ENCODE measurements at regions of chr5 and their contacts with region 1.

Region 1: DNA sequence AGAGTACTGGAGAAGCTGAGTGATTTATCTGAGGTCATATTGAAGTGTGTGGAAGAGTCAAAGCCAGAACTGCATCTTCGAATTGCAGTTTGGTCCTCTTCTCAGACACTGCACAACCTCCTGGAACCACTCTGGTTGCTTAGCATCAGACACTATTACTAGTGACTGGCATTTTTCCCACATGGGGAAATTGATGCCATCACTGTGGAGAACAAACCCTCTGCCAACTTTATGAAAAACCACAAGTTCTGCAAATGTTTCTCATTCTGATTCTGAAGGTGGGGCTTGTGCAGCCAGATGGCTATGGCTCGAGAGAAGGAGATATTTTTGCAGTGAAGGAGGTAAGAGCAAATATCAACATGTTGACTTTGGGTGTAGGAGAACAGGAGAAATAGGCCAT is 67.2 kb downstream of the KCTD16 start:
- DNase-seq: no peak
- H3K4me3 ChIP-seq: no peak overlapping the region
- H3K27ac ChIP-seq: no peak overlapping the region
- H3K4me1 ChIP-seq: no peaks in the 10 kb centered on the region
- H3K27me3 ChIP-seq: no peaks in the 10 kb centered on the region
- CTCF ChIP-seq: no peak

Region 2: GRCh38 chr5:144292029-144292428 is 54.2 kb after region 1 on chr5:
- CTCF ChIA-PET with region 1: no interaction called
- POLR2A ChIA-PET with region 1: no interaction called
- intact Hi-C with region 1: loop called (anchors 10 kb)
- DNase-seq: no peak
- H3K4me3 ChIP-seq: no peak overlapping the region
- H3K27ac ChIP-seq: no peak overlapping the region
- H3K4me1 ChIP-seq: no peaks in the 10 kb centered on the region
- H3K27me3 ChIP-seq: peaks cover 2% of the 10 kb centered on the region; the same call in 1 of the 2 replicates
- CTCF ChIP-seq: no peak

Measured in PC-9 (cell line).